HepG2 (cell line): ENCODE measurements at regions of chr2 and their contacts with region 1.

Region 1: DNA sequence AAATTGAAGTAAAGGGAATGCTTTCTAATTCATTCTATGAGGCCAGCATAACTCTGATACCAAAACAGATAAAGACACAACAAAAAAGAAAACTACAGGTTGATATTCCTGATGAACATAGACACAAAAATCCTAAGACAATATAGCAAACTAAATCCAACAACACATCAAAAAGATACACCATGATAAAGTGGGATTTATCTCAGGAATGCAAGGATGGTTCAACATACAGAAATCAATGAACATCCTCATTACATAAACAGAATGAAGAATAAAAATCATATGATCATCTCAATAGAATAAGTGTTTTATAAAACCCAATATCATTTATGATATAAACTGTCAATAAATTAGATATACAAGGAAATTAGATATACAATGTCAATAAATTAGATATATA is 65.7 kb downstream of the ZSWIM2 start:
- DNase-seq: no peak
- ATAC-seq: no peak
- H3K4me3 ChIP-seq: no peak overlapping the region
- H3K27ac ChIP-seq: no peak overlapping the region
- H3K4me1 ChIP-seq: no peaks in the 10 kb centered on the region
- H3K27me3 ChIP-seq: no peaks in the 10 kb centered on the region
- CTCF ChIP-seq: no peak
- EP300 ChIP-seq: no peak
- POLR2A ChIP-seq: no peak
- RAD21 ChIP-seq: no peak

Region 2: DNA sequence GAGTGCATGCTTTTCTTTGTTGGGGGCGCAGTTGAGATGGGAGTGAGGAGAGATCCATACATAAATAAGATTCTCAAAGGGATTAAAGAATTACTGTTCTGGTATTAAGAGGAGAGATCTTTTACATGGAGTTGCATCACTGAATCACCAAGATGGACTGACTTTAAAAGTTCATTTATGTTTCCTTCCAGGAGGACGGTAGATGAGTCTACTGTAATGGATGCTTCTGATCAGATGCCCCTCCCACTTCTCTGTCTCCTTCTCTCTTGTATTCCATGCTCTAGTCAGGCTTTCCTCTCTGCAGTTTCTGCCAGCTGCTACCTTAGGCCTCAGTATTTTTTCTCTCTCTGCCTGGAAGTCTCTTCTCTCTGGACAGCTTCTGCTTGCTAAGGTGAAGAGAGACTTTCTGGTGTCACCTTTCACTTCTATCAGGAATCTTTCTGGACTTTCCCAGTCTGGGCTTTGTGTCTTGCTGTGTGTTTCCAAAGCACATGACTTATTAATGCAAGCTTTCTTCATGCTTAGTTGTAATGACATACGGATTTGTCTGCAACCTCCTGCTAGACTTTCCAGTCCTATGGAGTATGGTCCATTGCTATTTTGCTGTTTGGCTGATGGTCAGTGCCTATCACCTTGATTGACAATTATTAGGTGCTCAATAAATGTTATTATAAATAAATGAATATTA is 65.8 kb before region 1 on chr2:
- CTCF ChIA-PET with region 1: no interaction called
- POLR2A ChIA-PET with region 1: no interaction called
- in situ Hi-C with region 1: no loop called
- intact Hi-C with region 1: loop called (anchors 2 kb)
- DNase-seq: no peak
- ATAC-seq: no peak
- H3K4me3 ChIP-seq: no peak overlapping the region
- H3K27ac ChIP-seq: no peak overlapping the region
- H3K4me1 ChIP-seq: no peaks in the 10 kb centered on the region
- H3K27me3 ChIP-seq: no peaks in the 10 kb centered on the region
- CTCF ChIP-seq: no peak
- EP300 ChIP-seq: no peak
- POLR2A ChIP-seq: no peak
- RAD21 ChIP-seq: no peak

Region 3: DNA sequence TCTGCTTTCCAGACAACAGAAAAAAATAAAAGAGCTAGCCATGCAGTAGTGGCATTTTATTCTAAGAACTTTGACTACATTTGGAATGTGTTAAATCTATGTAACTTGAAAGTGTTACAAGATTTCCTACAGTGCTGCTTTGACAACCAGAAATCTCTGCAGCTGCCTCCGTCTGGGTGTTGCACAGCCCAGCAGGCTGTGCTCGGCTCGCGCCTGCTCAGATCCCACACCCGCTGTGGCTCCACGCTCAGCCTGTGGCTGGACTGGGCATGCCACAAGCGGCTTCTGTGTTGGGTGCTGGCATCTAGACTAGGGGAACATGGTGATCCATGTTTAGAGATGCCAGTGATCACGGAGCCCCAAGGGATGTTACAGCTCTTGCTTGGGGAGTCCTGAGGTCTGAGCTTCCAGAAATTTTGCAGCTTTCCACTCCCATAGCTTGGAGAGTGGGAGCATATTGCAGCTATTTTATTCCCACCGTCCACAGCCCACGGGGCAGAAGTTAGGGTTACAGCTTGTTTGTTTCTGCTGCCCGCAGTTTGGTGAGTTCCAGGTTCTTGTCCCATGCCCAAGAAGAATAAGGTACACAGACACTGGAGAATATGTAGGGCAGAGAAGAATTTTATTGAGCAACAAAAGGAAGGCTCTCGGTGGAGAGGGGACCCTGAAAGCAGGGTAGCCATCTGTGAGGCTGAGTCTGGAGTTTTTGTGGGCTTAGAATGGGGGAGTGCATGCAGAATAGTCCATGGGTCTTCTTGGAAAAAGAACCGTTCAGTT is 45.3 kb before region 1 on chr2:
- CTCF ChIA-PET with region 1: no interaction called
- POLR2A ChIA-PET with region 1: no interaction called
- in situ Hi-C with region 1: no loop called
- intact Hi-C with region 1: no loop called
- DNase-seq: no peak
- ATAC-seq: no peak
- H3K4me3 ChIP-seq: no peak overlapping the region
- H3K27ac ChIP-seq: no peak overlapping the region
- H3K4me1 ChIP-seq: no peaks in the 10 kb centered on the region
- H3K27me3 ChIP-seq: 0 out of 5 replicates have a peak, but pooled peaks cover 0 to under 1% of the 10 kb centered on the region in 2 experiments
- CTCF ChIP-seq: no peak
- EP300 ChIP-seq: no peak
- POLR2A ChIP-seq: no peak
- RAD21 ChIP-seq: no peak